CD4-positive, alpha-beta memory T cell (primary cell): ENCODE measurements at regions of chr4 and their contacts with region 1.

Region 1: GRCh38 chr4:15001869-15002658 is at the start of gene CPEB2:
- DNase-seq: peak; percentile 90 to 95 (median 92)
- H3K4me3 ChIP-seq: peak within 1 kb of the TSS; percentile 81 to 96
- H3K4me3 Mint-ChIP-seq: peak within 1 kb of the TSS; percentile 90 to 98 (median 94)
- H3K27ac ChIP-seq: peak within 1 kb of the TSS; percentile 100
- H3K27ac Mint-ChIP-seq: peak within 1 kb of the TSS; percentile 97 to 99 (median 98)
- H3K4me1 ChIP-seq: peaks cover 21% of the 10 kb centered on the region
- H3K4me1 Mint-ChIP-seq: peaks cover 12 to 31% (median 20%) of the 10 kb centered on the region in 4 donors
- H3K27me3 ChIP-seq: no peaks in the 10 kb centered on the region
- H3K27me3 Mint-ChIP-seq: no peaks in the 10 kb centered on the region
- total RNA-seq, gene CPEB2: 15.7 to 16.9 TPM

Region 2: DNA sequence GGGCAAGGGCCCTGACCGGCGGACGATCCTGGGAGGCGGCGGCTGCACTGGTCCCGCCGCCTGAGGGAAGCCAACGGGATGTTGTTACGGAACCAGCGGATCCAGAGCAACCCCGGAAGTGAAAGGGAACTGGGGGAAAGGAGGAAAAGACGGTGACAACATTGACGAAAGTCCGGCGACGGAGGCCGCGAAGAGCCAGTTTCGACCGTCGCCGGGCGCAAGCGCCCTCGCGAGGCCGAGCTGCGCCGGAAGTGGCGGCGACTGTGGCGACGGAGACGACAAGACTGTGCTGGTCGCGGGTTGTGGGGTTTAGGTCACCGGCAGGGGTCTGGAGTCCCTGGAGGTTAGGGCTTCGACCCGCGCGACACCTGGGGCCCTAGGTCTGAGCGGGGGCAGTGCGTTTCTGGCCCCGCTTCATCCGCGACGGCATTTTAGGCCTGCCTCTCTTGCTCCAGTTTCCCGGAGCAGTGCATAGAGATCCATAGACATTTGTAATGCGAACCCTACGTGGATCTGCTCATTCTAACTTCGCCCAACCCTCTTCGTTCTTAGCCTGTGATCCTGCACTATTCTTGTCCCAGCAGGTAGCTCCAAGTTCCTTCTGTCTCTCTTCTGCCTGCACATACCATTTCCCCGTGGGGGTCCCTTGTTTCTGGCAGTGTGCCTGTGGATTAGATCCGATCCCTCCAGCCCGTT is 1374.3 kb before region 1 on chr4 and contains the start of gene BOD1L1:
- CTCF ChIA-PET with region 1: no interaction called
- POLR2A ChIA-PET with region 1: interaction called, 5 read pairs
- intact Hi-C with region 1: loop called (anchors 1 kb)
- DNase-seq: peak; percentile 71 to 83 (median 78)
- H3K4me3 ChIP-seq: peak within 1 kb of the TSS; percentile 70 to 95
- H3K4me3 Mint-ChIP-seq: peak within 1 kb of the TSS; percentile 94 to 98 (median 97)
- H3K27ac ChIP-seq: peak within 1 kb of the TSS; percentile 81
- H3K27ac Mint-ChIP-seq: peak within 1 kb of the TSS; percentile 93 to 99 (median 98)
- H3K4me1 ChIP-seq: peaks cover 41% of the 10 kb centered on the region
- H3K4me1 Mint-ChIP-seq: peaks cover 30 to 57% (median 46%) of the 10 kb centered on the region in 4 donors
- H3K27me3 ChIP-seq: no peaks in the 10 kb centered on the region
- H3K27me3 Mint-ChIP-seq: no peaks in the 10 kb centered on the region
- total RNA-seq, gene BOD1L1: 67.8 to 72.3 TPM

Region 3: DNA sequence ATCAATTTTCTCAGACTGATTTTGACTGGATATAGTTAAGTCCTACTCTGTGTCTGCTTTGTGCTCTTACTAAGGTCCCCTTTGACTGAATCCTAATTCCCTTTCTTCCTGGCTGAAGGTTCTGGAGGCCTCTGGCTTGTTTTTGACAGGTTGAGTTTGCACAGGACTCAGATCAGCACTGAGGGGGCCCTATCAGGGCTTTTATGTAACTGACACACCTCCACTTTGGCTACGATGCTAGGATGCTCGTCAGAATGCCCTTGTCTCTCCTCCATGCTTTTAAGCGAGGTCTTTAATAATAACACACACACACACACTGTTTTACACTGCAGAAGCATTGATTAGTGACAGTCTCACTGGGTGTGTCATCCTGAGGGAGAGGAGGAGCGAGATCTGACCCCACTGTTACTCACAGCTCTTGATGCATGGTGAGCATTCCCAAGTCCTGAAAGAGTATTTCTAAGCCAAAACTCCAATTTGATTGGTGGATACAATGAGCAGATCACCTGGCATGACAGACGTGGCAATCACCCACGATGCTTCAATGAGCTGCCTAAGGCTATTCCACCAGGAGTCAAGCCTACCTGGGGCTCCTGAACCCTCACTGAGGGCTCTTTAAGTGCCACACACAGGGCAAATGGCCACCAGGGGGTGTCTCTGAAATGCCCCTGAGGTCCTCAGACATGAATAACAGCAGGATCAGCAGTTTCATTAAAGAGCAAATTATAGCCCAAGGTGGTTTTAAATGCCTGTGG is 130.2 kb before region 1 on chr4:
- CTCF ChIA-PET with region 1: no interaction called
- POLR2A ChIA-PET with region 1: interaction called, 3 read pairs
- intact Hi-C with region 1: loop called (anchors 1 kb)
- DNase-seq: peak in 3 of 5 donors; percentile 4 to 24 (median 7)
- H3K4me3 ChIP-seq: no peak overlapping the region
- H3K4me3 Mint-ChIP-seq: no peak overlapping the region
- H3K27ac ChIP-seq: no peak overlapping the region
- H3K27ac Mint-ChIP-seq: no peak overlapping the region
- H3K4me1 ChIP-seq: peaks cover 2% of the 10 kb centered on the region
- H3K4me1 Mint-ChIP-seq: peaks cover 4 to 16% (median 5%) of the 10 kb centered on the region in 4 donors
- H3K27me3 ChIP-seq: no peaks in the 10 kb centered on the region
- H3K27me3 Mint-ChIP-seq: peaks cover 0 to 5% of the 10 kb centered on the region in 2 donors

Region 4: GRCh38 chr4:14934704-14935390 is 67.2 kb before region 1 on chr4:
- CTCF ChIA-PET with region 1: no interaction called
- POLR2A ChIA-PET with region 1: no interaction called
- intact Hi-C with region 1: no loop called
- DNase-seq: no peak
- H3K4me3 ChIP-seq: no peak overlapping the region
- H3K4me3 Mint-ChIP-seq: no peak overlapping the region
- H3K27ac ChIP-seq: no peak overlapping the region
- H3K27ac Mint-ChIP-seq: no peak overlapping the region
- H3K4me1 ChIP-seq: no peaks in the 10 kb centered on the region
- H3K4me1 Mint-ChIP-seq: no peaks in the 10 kb centered on the region
- H3K27me3 ChIP-seq: no peaks in the 10 kb centered on the region
- H3K27me3 Mint-ChIP-seq: peaks cover 16 to 22% of the 10 kb centered on the region in 2 donors

Region 5: DNA sequence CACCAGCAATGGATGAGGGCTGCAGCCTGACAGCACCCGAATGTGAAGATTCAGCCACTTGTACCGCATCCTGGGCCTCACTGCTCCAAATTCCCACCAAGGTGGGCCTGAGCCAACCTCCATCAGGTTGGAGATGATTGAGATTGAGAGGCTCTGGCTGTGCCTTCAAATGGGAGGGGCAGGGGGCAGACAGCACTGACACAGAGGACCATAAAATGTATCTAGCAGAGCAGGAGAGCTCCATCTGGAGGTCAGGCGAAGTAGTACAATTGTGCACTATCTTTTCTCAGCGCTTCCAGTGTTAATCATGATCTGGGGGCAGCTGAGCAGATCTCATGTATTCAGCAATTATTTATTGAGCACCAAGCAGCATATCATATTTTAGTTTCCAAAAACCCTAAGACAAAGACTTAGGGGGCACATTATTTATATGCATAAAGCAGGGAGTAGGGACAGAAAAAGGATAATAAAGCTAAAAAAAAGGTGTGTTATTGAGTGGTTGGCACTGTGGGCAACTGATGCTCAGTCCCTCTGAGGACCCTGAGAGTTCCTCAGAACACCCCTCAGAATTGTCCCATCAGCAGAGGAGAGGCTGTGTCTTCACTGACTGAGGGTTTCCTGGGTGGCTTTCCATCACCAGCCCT is 394.2 kb after region 1 on chr4:
- CTCF ChIA-PET with region 1: no interaction called
- POLR2A ChIA-PET with region 1: no interaction called
- intact Hi-C with region 1: loop called (anchors 1 kb)
- DNase-seq: peak; percentile 33 to 44 (median 38)
- H3K4me3 ChIP-seq: no peak overlapping the region
- H3K4me3 Mint-ChIP-seq: no peak overlapping the region
- H3K27ac ChIP-seq: no peak overlapping the region
- H3K27ac Mint-ChIP-seq: peak overlapping the region in 1 of 7 donors; percentile 22
- H3K4me1 ChIP-seq: peaks cover 12% of the 10 kb centered on the region
- H3K4me1 Mint-ChIP-seq: peaks cover 10 to 27% (median 22%) of the 10 kb centered on the region in 4 donors
- H3K27me3 ChIP-seq: no peaks in the 10 kb centered on the region
- H3K27me3 Mint-ChIP-seq: no peaks in the 10 kb centered on the region

Region 6: GRCh38 chr4:15655229-15656037 is 653.4 kb after region 1 on chr4 and contains the start of gene FBXL5:
- CTCF ChIA-PET with region 1: no interaction called
- POLR2A ChIA-PET with region 1: interaction called, 26 read pairs
- intact Hi-C with region 1: loop called (anchors 1 kb)
- DNase-seq: peak; percentile 79 to 91 (median 87)
- H3K4me3 ChIP-seq: peak within 1 kb of the TSS; percentile 37 to 94
- H3K4me3 Mint-ChIP-seq: peak within 1 kb of the TSS; percentile 94 to 98 (median 97)
- H3K27ac ChIP-seq: peak within 1 kb of the TSS; percentile 88
- H3K27ac Mint-ChIP-seq: peak within 1 kb of the TSS; percentile 96 to 99 (median 98)
- H3K4me1 ChIP-seq: peaks cover 45% of the 10 kb centered on the region
- H3K4me1 Mint-ChIP-seq: peaks cover 32 to 57% (median 38%) of the 10 kb centered on the region in 4 donors
- H3K27me3 ChIP-seq: no peaks in the 10 kb centered on the region
- H3K27me3 Mint-ChIP-seq: no peaks in the 10 kb centered on the region
- total RNA-seq, gene FBXL5: 62.2 to 62.8 TPM

Region 7: DNA sequence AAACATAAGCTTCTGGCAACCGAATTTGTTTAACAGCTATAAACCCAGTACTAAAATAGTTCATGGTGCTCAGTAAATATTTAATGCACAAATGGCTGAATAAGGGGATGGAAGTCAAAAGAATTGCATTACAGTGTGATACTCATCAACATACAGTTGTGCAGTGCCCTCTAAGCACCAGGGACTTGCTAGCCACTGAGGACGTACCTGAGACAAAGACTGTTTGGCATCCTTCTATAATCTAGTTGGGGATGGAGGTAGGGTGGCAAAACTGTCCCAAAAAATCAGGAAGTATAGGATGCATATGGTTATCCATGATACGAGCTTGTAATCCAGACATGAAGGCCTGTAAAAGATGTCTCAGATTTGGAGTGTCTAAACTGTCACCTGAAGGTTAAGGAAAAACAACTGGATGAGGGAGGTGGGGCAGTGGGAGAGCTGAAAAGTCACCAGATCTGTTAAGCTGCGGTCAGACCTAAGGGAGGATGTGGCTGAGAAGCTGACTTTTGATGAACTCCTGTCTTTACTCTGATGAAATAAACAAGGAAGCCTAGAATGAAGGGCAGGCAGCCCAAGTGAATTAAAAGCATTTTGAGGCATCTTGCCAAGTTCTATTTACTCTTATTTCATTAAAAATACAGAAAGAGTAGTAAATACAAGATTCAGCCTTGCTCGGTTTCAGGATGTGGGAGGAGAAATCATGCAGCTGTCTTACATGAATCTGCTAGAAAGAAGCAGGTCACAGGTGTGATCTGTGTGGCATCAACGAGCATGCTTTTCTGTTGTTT is 764.0 kb after region 1 on chr4:
- CTCF ChIA-PET with region 1: no interaction called
- POLR2A ChIA-PET with region 1: interaction called, 6 read pairs
- intact Hi-C with region 1: loop called (anchors 1 kb)
- DNase-seq: peak; percentile 66 to 80 (median 79)
- H3K4me3 ChIP-seq: no peak overlapping the region
- H3K4me3 Mint-ChIP-seq: peak overlapping the region; percentile 10 to 83 (median 62)
- H3K27ac ChIP-seq: no peak overlapping the region
- H3K27ac Mint-ChIP-seq: peak overlapping the region; percentile 10 to 93 (median 73)
- H3K4me1 ChIP-seq: peaks cover 38% of the 10 kb centered on the region
- H3K4me1 Mint-ChIP-seq: peaks cover 25 to 43% (median 33%) of the 10 kb centered on the region in 4 donors
- H3K27me3 ChIP-seq: no peaks in the 10 kb centered on the region
- H3K27me3 Mint-ChIP-seq: no peaks in the 10 kb centered on the region

Region 8: DNA sequence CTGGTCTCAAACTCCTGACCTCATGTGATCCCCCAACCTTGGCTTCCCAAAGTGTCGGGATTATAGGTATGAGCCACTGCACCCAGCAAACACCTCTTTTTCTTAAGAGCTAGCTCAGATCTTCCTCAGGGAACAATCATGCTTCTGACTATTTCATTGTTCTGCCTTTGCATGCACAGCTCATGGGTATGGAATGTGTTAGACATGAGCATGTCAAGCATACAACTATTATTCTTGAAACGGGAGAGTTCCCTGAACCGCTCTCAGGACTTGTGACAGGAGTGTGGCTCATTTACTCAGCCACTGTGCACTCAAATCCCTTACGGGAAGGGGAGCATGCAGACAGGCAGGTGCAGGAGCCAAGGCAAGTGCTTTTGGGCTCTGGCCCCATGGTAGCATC is 1455.9 kb after region 1 on chr4:
- CTCF ChIA-PET with region 1: no interaction called
- POLR2A ChIA-PET with region 1: no interaction called
- intact Hi-C with region 1: no loop called
- DNase-seq: no peak
- H3K4me3 ChIP-seq: no peak overlapping the region
- H3K4me3 Mint-ChIP-seq: no peak overlapping the region
- H3K27ac ChIP-seq: no peak overlapping the region
- H3K27ac Mint-ChIP-seq: no peak overlapping the region
- H3K4me1 ChIP-seq: no peaks in the 10 kb centered on the region
- H3K4me1 Mint-ChIP-seq: no peaks in the 10 kb centered on the region
- H3K27me3 ChIP-seq: no peaks in the 10 kb centered on the region
- H3K27me3 Mint-ChIP-seq: no peaks in the 10 kb centered on the region